Stomach (tissue), 19 donors: ENCODE measurements at regions of chr5 and their contacts with region 1.

Region 1: DNA sequence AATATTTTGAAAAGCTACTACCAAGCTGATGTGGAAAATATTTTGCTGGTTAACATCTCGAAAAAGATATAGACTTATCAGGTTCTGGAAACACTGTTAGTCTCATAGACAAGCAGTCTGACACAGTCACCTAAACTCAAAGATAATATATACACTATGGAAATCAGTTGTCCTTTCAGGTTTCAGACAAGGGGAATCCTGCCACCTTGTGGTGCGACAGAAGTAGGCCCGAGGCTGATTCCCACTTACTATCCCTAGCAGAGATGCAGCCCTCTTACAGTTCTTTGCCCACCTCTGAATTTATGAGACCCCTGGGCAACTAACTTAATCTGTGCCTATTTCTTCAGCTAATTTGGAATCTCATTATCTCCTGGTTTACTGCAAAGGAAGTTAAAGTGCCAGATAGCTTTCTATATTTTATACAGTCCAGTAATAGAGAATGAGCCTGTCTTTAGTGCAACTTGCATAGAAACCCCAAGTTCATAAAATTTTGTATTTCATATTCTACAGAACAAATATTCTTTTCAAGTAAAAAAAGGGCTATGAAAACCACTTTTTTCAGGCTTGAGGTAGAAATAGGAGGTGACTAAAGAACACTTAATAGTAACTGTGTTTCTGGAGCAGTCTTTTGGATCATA is 16.9 kb downstream of the RAD1 start:
- DNase-seq: peak; percentile 67 to 90
- H3K4me3 ChIP-seq: no peak overlapping the region
- H3K27ac ChIP-seq: no peak overlapping the region
- H3K4me1 ChIP-seq: no peaks in the 10 kb centered on the region
- H3K27me3 ChIP-seq: no peaks in the 10 kb centered on the region
- CTCF ChIP-seq: peak in 5 of 7 experiments; percentile 75 to 87 (median 81)
- EP300 ChIP-seq: no peak
- POLR2A ChIP-seq: no peak

Region 2: DNA sequence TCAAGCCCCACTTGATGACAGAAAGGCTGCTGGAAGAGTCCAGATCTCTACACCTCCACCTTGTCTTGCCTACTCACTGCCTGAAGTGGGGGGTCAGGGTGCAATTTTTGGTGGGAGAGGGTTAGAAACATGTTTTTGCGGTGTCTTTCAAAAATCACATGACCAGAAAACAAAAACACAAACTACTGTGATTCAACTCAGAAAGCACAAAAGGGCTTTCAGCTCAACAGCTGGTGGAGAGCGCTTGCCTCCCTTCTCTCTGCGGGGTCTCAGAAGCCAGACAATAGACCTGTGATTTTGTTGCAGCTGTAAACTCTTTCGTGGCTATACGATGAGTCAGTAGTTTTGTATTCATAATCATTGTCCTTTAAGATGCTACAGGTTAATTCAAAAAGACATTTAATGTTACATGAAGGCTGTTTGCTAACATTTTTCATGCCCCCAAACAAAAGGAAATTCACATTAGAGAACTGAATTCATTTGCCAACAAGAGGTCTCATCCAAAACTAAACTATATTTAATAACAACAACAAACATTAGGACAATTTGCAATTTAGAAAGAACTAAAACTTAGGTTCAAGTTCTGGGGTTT is 414.8 kb before region 1 on chr5:
- intact Hi-C with region 1: loop called (anchors 5 kb)
- DNase-seq: no peak
- H3K4me3 ChIP-seq: no peak overlapping the region
- H3K27ac ChIP-seq: peak overlapping the region in 1 of 5 donors; percentile 14
- H3K4me1 ChIP-seq: peaks cover 14 to 33% (median 27%) of the 10 kb centered on the region in 4 donors
- H3K27me3 ChIP-seq: no peaks in the 10 kb centered on the region
- CTCF ChIP-seq: no peak
- EP300 ChIP-seq: no peak
- POLR2A ChIP-seq: no peak

Region 3: GRCh38 chr5:34522599-34523386 is 375.6 kb before region 1 on chr5:
- intact Hi-C with region 1: loop called (anchors 10 kb)
- DNase-seq: peak; percentile 75 to 92
- H3K4me3 ChIP-seq: no peak overlapping the region
- H3K27ac ChIP-seq: peak overlapping the region in 2 of 5 donors; percentile 23 to 48
- H3K4me1 ChIP-seq: peaks cover 0 to 13% (median 8%) of the 10 kb centered on the region in 4 donors
- H3K27me3 ChIP-seq: no peaks in the 10 kb centered on the region
- CTCF ChIP-seq: peak in 6 of 7 experiments; percentile 46 to 75 (median 65)
- EP300 ChIP-seq: no peak
- POLR2A ChIP-seq: no peak

Region 4: DNA sequence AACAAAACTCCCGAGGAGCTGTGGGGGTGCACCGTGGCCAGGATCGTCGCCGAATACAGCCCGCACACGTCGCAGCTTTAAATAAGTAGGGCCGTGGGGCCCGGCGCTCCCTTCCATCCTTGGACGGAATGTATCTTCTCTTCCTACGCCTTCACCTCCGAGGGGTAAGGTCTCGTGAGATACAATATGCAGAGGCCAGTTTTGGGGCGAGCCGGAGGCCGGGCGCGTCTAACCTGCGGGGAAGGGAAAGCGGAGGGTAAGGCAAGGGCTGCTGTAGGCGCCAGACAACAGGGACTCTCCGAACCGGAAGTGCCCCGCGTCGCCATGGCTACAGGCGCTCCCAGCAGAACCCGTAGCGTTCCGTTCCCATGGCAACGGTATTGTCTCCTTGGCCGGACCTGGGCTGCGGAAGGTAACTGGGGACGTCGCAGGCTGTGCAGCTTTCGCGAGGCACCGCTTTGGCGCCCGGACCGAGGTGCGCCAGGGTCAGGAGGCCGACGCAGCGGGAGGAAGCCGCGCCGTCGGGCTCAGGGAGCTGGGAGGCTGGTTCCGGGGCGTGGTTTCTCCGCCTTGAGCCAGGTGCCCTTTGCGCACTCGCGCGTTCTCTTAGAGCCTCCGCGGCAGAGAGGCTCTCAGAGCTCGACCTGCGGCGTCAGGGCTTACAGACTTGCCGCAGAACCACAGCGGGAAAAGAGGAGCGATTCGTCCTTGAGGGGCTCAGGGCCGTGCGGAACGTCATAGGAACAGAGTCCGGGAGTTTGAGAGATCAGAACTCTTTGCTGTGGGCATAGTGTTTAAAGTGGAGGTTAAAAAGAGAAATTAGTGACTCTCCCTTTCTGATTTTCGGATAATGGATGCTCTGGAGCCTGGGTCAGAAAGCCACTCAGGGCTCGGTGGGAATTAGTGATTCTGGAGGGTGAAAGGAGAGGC is 59.3 kb before region 1 on chr5 and contains the start of gene TTC23L:
- intact Hi-C with region 1: loop called (anchors 10 kb)
- DNase-seq: peak; percentile 91 to 96
- H3K4me3 ChIP-seq: peak within 1 kb of the TSS; percentile 63 to 80 (median 71)
- H3K27ac ChIP-seq: peak within 1 kb of the TSS; percentile 64 to 83 (median 76)
- H3K4me1 ChIP-seq: peaks cover 0 to 13% (median 9%) of the 10 kb centered on the region in 4 donors
- H3K27me3 ChIP-seq: no peaks in the 10 kb centered on the region
- CTCF ChIP-seq: no peak
- EP300 ChIP-seq: no peak
- POLR2A ChIP-seq: peak in 1 of 4 donors; percentile 66
- total RNA-seq, gene TTC23L: 0.89 to 1.5 TPM in 2 of 5 donors, not detected in the others

Region 5: DNA sequence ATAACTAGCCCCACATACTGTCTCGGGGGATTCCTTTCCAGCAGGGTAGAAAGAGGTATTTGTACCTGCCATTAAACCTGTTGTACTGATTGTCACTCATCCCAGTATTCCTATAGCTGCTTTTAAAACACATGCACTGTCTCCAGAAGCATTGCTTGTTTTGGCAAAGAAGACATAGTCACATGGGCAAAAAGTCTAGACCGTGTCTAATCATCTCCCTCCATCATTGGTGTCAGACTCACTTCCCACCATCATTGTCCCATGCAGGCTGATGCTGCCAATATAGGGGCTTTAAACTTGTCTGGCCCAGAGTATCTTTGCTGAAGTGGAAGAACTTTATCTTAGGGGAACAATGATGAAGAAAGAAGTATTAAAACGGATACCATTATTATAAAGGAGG is 43.6 kb after region 1 on chr5:
- intact Hi-C with region 1: no loop called
- DNase-seq: no peak
- H3K4me3 ChIP-seq: no peak overlapping the region
- H3K27ac ChIP-seq: no peak overlapping the region
- H3K4me1 ChIP-seq: no peaks in the 10 kb centered on the region
- H3K27me3 ChIP-seq: no peaks in the 10 kb centered on the region
- CTCF ChIP-seq: no peak
- EP300 ChIP-seq: no peak
- POLR2A ChIP-seq: no peak